ENCODE measurements at regions of chr3 and their contacts with region 1.

Region 1: GRCh38 chr3:27712136-27713077 is 9.7 kb downstream of the EOMES start:
- DNase-seq: peak; percentile 86
- H3K4me3 ChIP-seq: peak overlapping the region; percentile 51 to 66
- H3K27ac ChIP-seq: no peak overlapping the region
- H3K4me1 ChIP-seq: peaks cover 0 to 24% of the 10 kb centered on the region in 2 experiments; a peak in 2 of 4 replicates
- H3K27me3 ChIP-seq: peaks cover 82% of the 10 kb centered on the region
- CTCF ChIP-seq: peak; percentile 81
- EP300 ChIP-seq: no peak
- RAD21 ChIP-seq: peak; percentile 84

Region 2: DNA sequence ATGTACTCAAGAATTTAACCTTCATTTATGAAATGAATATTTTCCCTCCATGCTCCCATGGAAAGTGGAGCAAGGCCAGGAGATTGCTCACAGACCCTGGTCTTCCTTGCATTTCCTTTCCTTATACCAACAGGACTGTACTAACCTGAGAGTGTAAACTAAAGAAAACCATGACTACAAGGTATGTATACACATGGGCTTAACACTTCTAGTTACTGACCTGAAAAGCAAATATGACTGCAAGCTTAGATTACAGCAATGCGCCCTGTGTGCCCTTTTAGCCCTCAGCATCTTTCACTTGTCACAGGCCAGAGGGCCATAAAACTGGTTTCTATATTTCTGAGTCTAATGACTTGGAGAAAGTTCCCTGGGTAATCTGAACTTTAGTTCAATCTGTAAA is 395.3 kb before region 1 on chr3:
- CTCF ChIA-PET with region 1: interaction called, 12 read pairs
- POLR2A ChIA-PET with region 1: no interaction called
- DNase-seq: no peak
- H3K4me3 ChIP-seq: no peak overlapping the region
- H3K27ac ChIP-seq: no peak overlapping the region
- H3K4me1 ChIP-seq: no peaks in the 10 kb centered on the region
- H3K27me3 ChIP-seq: no peaks in the 10 kb centered on the region
- CTCF ChIP-seq: no peak
- EP300 ChIP-seq: no peak
- RAD21 ChIP-seq: no peak

Region 3: DNA sequence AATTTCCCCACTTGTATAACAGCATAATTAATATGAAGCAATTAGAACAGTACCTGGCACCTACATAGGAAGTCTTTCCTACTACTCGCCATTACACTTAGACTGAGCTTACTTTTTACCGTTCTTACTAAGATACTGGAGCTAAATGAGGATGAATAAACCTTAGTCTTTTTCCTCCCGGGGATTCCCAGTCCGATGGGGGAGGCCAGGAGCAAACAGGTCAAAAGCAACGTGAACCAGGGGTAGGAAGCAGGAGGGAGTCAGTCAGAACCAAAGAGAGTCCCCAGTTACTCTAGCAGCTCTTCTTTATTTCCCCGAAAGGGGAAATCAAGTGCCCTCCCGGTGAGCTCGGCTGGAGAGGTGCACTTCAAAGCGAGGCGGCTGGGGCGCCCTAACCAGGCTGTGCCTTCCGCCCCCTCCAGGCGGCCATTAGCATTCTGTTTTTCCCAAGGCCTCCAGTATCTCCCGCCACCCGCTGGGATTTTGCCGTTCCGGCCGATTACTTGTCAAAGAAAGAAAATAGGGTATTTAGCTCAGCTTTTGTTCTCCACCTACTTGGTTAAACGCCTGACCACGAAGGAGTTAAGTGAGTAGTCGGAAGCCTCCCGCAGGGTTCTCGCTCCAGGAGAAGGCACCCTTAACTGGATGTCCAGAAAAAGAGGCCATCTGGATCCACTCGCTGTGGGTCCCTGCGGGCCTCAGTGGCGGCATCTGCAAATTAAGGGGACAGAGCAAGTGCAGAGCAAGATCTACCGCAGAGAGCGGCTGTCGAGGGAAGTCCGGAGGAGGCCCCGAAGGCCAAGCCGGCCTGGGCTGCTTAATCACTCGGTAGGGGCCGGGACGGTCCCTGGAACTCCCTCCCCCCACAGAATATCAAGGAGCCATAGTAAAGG is 16.0 kb after region 1 on chr3:
- CTCF ChIA-PET with region 1: interaction called, 60 read pairs
- POLR2A ChIA-PET with region 1: no interaction called
- DNase-seq: peak; percentile 48
- H3K4me3 ChIP-seq: no peak overlapping the region; a peak in 1 of 4 replicates
- H3K27ac ChIP-seq: no peak overlapping the region
- H3K4me1 ChIP-seq: peaks cover 3 to 9% of the 10 kb centered on the region in 2 experiments; a peak in 1 of 4 replicates
- H3K27me3 ChIP-seq: peaks cover 80% of the 10 kb centered on the region
- CTCF ChIP-seq: peak; percentile 24; the same call in 1 of the 2 replicates
- EP300 ChIP-seq: no peak
- RAD21 ChIP-seq: no peak

Region 4: GRCh38 chr3:28328188-28329151 is 616.1 kb after region 1 on chr3:
- CTCF ChIA-PET with region 1: interaction called, 72 read pairs
- POLR2A ChIA-PET with region 1: no interaction called
- DNase-seq: no peak
- H3K4me3 ChIP-seq: no peak overlapping the region
- H3K27ac ChIP-seq: no peak overlapping the region
- H3K4me1 ChIP-seq: no peaks in the 10 kb centered on the region; a peak in 1 of 4 replicates
- H3K27me3 ChIP-seq: no peaks in the 10 kb centered on the region
- CTCF ChIP-seq: peak; percentile 85
- EP300 ChIP-seq: no peak
- RAD21 ChIP-seq: peak; percentile 66

Region 5: DNA sequence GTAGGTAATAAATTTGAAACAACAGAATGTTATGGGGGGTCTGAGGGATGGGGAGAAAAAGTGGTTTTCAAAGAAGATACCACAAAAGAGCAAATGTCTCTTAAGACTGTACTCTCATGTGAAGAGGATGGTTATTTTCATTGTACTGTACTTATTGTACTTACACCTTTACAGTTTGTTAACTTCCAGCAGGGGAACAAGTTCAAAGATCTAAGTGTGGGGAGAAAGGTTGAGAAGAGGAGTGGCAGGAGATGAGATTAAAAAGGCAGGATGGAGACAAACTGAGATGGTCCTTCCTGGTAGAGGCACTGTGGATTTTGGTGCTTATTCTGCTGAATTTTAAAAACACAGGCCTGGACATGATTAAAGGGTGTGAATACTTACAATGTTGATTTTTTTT is 630.7 kb after region 1 on chr3:
- CTCF ChIA-PET with region 1: interaction called, 13 read pairs
- POLR2A ChIA-PET with region 1: no interaction called
- DNase-seq: no peak
- H3K4me3 ChIP-seq: peak overlapping the region in 1 of 2 experiments; percentile 18; a peak in 1 of 4 replicates
- H3K27ac ChIP-seq: no peak overlapping the region
- H3K4me1 ChIP-seq: peaks cover 6 to 30% of the 10 kb centered on the region in 2 experiments; a peak in 2 of 4 replicates
- H3K27me3 ChIP-seq: no peaks in the 10 kb centered on the region
- CTCF ChIP-seq: no peak
- EP300 ChIP-seq: no peak
- RAD21 ChIP-seq: no peak

Measured in SK-N-SH (cell line).